IMR-90 (cell line): ENCODE measurements at regions of chr17 and their contacts with region 1.

Region 1: DNA sequence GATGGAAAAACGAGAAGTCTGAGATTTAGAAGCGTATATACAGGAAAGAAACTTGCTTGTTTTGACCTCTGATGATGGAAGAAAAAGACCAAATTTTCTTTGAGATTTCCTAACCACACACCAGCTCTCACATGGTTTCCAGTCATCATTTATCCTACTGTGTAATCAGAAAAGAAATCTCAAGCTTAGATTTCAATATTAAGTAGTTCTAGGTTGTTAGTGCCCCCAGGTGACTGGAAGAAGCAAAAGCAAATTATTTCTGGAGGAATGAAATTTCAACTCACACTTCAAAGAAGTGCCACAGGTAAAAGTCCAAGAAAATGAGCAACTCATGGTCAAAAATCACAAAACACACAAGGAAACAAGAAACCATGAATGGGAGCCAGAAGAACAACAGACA is 51.8 kb upstream of the KDM6B start:
- DNase-seq: peak; percentile 61
- ATAC-seq: peak; percentile 56; the same call in 1 of the 2 replicates
- H3K4me3 ChIP-seq: no peak overlapping the region
- H3K27ac ChIP-seq: no peak overlapping the region
- H3K4me1 ChIP-seq: peaks cover 2% of the 10 kb centered on the region; the same call in 1 of the 2 replicates
- H3K27me3 ChIP-seq: peaks cover 19% of the 10 kb centered on the region
- CTCF ChIP-seq: peak; percentile 64
- POLR2A ChIP-seq: no peak
- RAD21 ChIP-seq: peak; percentile 66

Region 2: DNA sequence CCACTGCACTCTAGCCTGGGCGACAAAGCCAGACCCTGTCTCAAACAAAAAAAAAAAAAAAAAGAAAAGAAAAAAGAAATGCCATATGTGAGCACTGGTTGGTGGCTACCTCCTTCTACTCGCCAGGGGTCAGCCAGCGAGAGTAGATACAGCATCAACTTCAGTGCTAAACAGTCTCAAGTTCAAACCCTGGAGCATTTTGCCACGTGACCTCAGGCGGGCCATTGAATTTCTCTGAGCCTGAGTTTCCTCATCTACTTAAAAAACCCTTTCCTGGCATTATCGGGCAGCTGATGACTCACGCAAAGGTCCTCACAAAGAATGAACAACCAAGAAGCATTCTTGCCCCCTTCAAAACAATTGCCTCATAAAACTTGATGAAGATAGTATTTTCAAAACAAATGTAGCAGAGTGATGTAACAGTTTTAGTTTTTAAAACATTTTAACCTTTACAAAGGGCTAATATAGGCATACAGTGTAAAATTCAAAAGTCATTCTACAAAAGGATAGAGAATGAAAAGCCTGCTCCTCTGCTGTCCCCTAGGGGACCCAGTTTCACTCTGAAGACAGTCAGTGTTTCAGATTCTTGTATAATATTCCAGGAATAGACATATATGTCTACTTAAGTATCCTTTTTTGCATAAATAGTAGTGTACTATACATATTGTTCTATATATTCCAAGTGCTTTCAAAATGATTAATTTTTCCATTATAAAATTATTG is 36.3 kb before region 1 on chr17:
- CTCF ChIA-PET with region 1: interaction called, 34 read pairs
- POLR2A ChIA-PET with region 1: no interaction called
- dilution Hi-C with region 1: no loop called
- in situ Hi-C with region 1: loop called (anchors 5 kb)
- intact Hi-C with region 1: loop called (anchors 1 kb)
- DNase-seq: peak; percentile 76
- ATAC-seq: peak; percentile 21
- H3K4me3 ChIP-seq: no peak overlapping the region
- H3K27ac ChIP-seq: peak overlapping the region; percentile 5; the same call in 1 of the 2 replicates
- H3K4me1 ChIP-seq: peaks cover 21% of the 10 kb centered on the region
- H3K27me3 ChIP-seq: peaks cover under 1% of the 10 kb centered on the region
- CTCF ChIP-seq: 0 out of 2 replicates have a peak, but pooled peaks have one; percentile 13
- POLR2A ChIP-seq: no peak
- RAD21 ChIP-seq: no peak